Psoas muscle (tissue), 8 donors: ENCODE measurements at regions of chr13 and their contacts with region 1.

Region 1: GRCh38 chr13:60379837-60380236 is 17.2 kb upstream of the TDRD3 start:
- DNase-seq: no peak
- ATAC-seq: no peak
- H3K4me3 ChIP-seq: no peak overlapping the region
- H3K27ac ChIP-seq: no peak overlapping the region
- H3K4me1 ChIP-seq: no peaks in the 10 kb centered on the region
- H3K27me3 ChIP-seq: no peaks in the 10 kb centered on the region
- CTCF ChIP-seq: no peak

Region 2: GRCh38 chr13:59413126-59413525 is 966.7 kb before region 1 on chr13:
- intact Hi-C with region 1: loop called in 1 of 2 experiments (anchors 10 kb)
- DNase-seq: no peak
- ATAC-seq: no peak
- H3K4me3 ChIP-seq: no peak overlapping the region
- H3K27ac ChIP-seq: no peak overlapping the region
- H3K4me1 ChIP-seq: no peaks in the 10 kb centered on the region
- H3K27me3 ChIP-seq: peaks cover 0 to 4% (median 0%) of the 10 kb centered on the region in 3 donors
- CTCF ChIP-seq: no peak

Region 3: GRCh38 chr13:61052175-61052574 is 672.3 kb after region 1 on chr13:
- intact Hi-C with region 1: no loop called
- DNase-seq: no peak
- ATAC-seq: no peak
- H3K4me3 ChIP-seq: no peak overlapping the region
- H3K27ac ChIP-seq: no peak overlapping the region
- H3K4me1 ChIP-seq: no peaks in the 10 kb centered on the region
- H3K27me3 ChIP-seq: peaks cover 0 to 1% (median 0%) of the 10 kb centered on the region in 3 donors
- CTCF ChIP-seq: no peak